MCF 10A (cell line): ENCODE measurements at regions of chr10 and their contacts with region 1.

Region 1: GRCh38 chr10:73060738-73061635 is 35.7 kb downstream of the P4HA1 start:
- DNase-seq: peak; percentile 65
- H3K4me3 Mint-ChIP-seq: no peak overlapping the region
- H3K27ac Mint-ChIP-seq: no peak overlapping the region
- H3K4me1 Mint-ChIP-seq: peaks cover 5% of the 10 kb centered on the region
- H3K27me3 Mint-ChIP-seq: no peaks in the 10 kb centered on the region
- CTCF ChIP-seq: peak; percentile 53

Region 2: DNA sequence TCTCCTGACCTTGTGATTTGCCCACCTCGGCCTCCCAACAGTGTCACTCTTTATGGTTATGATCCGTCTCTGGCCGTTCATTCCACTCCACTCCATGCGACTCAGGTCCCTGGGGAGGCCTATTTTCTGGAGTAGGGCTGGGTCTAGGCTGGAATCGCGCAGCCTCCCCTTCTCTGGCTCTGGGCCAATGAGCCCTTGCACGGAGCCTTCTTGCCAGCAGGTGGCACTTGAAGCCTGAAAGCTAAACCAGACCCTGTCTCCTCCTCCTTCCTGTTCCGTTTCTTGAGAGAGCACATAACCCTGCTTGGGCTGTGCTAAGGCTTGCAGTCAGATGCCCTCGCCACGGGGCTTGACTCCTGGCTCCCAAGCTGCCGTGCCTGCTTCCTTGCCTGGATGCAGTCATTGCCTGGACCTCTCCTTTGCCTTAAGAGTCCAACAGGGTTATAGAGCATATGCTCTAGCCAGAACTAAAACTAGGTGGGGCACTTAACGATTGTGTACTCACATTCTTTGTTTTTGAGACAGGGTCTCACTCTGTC is 696.7 kb before region 1 on chr10:
- CTCF ChIA-PET with region 1: interaction called, 4 read pairs
- POLR2A ChIA-PET with region 1: interaction called, 3 read pairs
- intact Hi-C with region 1: loop called (anchors 1 kb)
- DNase-seq: peak; percentile 94
- H3K4me3 Mint-ChIP-seq: peak overlapping the region; percentile 45
- H3K27ac Mint-ChIP-seq: no peak overlapping the region
- H3K4me1 Mint-ChIP-seq: peaks cover 7% of the 10 kb centered on the region
- H3K27me3 Mint-ChIP-seq: no peaks in the 10 kb centered on the region
- CTCF ChIP-seq: peak; percentile 91

Region 3: GRCh38 chr10:72625608-72626443 is 435.2 kb before region 1 on chr10 and contains the start of gene MICU1:
- CTCF ChIA-PET with region 1: no interaction called
- POLR2A ChIA-PET with region 1: no interaction called
- intact Hi-C with region 1: loop called (anchors 10 kb)
- DNase-seq: peak; percentile 96
- H3K4me3 Mint-ChIP-seq: peak within 1 kb of the TSS; percentile 75
- H3K27ac Mint-ChIP-seq: peak within 1 kb of the TSS; percentile 26
- H3K4me1 Mint-ChIP-seq: peaks cover 10% of the 10 kb centered on the region
- H3K27me3 Mint-ChIP-seq: no peaks in the 10 kb centered on the region
- CTCF ChIP-seq: no peak
- total RNA-seq, gene MICU1: 25.5 and 34.8 TPM in 2 replicates

Region 4: GRCh38 chr10:72834183-72834825 is 226.7 kb before region 1 on chr10:
- CTCF ChIA-PET with region 1: interaction called, 5 read pairs
- POLR2A ChIA-PET with region 1: no interaction called
- intact Hi-C with region 1: loop called (anchors 2 kb)
- DNase-seq: peak; percentile 75
- H3K4me3 Mint-ChIP-seq: no peak overlapping the region
- H3K27ac Mint-ChIP-seq: no peak overlapping the region
- H3K4me1 Mint-ChIP-seq: peaks cover 8% of the 10 kb centered on the region
- H3K27me3 Mint-ChIP-seq: no peaks in the 10 kb centered on the region
- CTCF ChIP-seq: peak; percentile 70

Region 5: GRCh38 chr10:72875250-72876055 is 185.5 kb before region 1 on chr10:
- CTCF ChIA-PET with region 1: interaction called, 3 read pairs
- POLR2A ChIA-PET with region 1: no interaction called
- intact Hi-C with region 1: loop called (anchors 1 kb)
- DNase-seq: peak; percentile 51
- H3K4me3 Mint-ChIP-seq: no peak overlapping the region
- H3K27ac Mint-ChIP-seq: no peak overlapping the region
- H3K4me1 Mint-ChIP-seq: no peaks in the 10 kb centered on the region
- H3K27me3 Mint-ChIP-seq: no peaks in the 10 kb centered on the region
- CTCF ChIP-seq: peak; percentile 38

Region 6: GRCh38 chr10:73076360-73077183 is 15.6 kb after region 1 on chr10:
- CTCF ChIA-PET with region 1: interaction called, 11 read pairs
- POLR2A ChIA-PET with region 1: interaction called, 9 read pairs
- intact Hi-C with region 1: no loop called
- DNase-seq: peak; percentile 71
- H3K4me3 Mint-ChIP-seq: peak overlapping the region; percentile 59
- H3K27ac Mint-ChIP-seq: peak overlapping the region; percentile 61
- H3K4me1 Mint-ChIP-seq: peaks cover 10% of the 10 kb centered on the region
- H3K27me3 Mint-ChIP-seq: no peaks in the 10 kb centered on the region
- CTCF ChIP-seq: no peak

Region 7: GRCh38 chr10:73117976-73118743 is 57.2 kb after region 1 on chr10:
- CTCF ChIA-PET with region 1: no interaction called
- POLR2A ChIA-PET with region 1: no interaction called
- intact Hi-C with region 1: no loop called
- DNase-seq: peak; percentile 83
- H3K4me3 Mint-ChIP-seq: peak overlapping the region; percentile 39
- H3K27ac Mint-ChIP-seq: peak overlapping the region; percentile 77
- H3K4me1 Mint-ChIP-seq: peaks cover 12% of the 10 kb centered on the region
- H3K27me3 Mint-ChIP-seq: no peaks in the 10 kb centered on the region
- CTCF ChIP-seq: no peak

Region 8: DNA sequence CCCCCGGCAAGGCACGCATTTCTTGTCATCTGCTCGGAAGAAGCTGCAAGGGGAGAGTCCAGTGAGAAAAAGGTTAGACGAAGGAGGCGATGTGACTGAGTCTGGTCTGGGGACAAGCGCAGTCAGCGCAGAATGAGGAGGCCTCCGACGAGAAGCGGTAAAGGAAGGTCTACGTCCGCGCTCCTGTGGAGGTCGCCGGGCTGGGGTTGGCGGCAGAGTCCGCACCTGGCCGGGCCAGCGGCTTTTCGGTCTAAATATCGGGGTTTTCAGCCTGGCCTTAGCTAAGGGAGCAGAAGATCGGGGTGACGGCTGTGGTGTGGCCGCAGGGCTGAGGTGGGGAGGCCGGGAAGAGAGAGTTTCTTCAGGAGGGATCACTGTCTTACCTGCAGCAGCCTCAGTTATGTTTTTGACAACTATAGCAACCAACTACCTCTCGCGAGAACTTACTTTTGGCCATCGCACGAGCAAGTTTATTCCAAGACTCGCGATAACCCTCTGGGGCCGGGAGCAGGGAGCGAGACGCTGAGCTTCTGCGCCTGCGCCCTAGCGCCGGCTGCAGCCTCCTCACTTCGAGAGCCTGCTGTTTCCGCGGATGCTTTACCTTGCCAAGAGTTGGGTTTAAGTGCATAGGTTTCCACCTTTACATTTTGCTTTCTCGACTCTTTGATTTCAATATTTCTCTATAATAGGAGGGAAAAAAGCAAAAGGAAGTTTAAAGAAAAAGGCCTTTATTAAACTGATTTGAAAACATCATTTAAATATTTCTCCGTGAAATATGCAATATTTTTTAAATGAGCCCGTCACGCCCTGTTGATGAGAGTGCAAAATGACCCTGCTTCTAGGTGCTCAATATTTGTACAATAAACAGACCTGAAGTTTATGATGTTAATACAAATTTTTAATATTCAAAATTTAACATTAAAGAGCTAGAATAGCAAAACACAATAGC is 297.6 kb after region 1 on chr10 and contains the start of gene CFAP70:
- CTCF ChIA-PET with region 1: no interaction called
- POLR2A ChIA-PET with region 1: no interaction called
- intact Hi-C with region 1: no loop called
- DNase-seq: peak; percentile 88
- H3K4me3 Mint-ChIP-seq: peak within 1 kb of the TSS; percentile 96
- H3K27ac Mint-ChIP-seq: peak within 1 kb of the TSS; percentile 98
- H3K4me1 Mint-ChIP-seq: peaks cover 11% of the 10 kb centered on the region
- H3K27me3 Mint-ChIP-seq: no peaks in the 10 kb centered on the region
- CTCF ChIP-seq: no peak
- total RNA-seq, gene CFAP70: 1.5 and 2.9 TPM in 2 replicates